Naive thymus-derived CD4-positive, alpha-beta T cell (primary cell): ENCODE measurements at regions of chr1 and their contacts with region 1.

Region 1: DNA sequence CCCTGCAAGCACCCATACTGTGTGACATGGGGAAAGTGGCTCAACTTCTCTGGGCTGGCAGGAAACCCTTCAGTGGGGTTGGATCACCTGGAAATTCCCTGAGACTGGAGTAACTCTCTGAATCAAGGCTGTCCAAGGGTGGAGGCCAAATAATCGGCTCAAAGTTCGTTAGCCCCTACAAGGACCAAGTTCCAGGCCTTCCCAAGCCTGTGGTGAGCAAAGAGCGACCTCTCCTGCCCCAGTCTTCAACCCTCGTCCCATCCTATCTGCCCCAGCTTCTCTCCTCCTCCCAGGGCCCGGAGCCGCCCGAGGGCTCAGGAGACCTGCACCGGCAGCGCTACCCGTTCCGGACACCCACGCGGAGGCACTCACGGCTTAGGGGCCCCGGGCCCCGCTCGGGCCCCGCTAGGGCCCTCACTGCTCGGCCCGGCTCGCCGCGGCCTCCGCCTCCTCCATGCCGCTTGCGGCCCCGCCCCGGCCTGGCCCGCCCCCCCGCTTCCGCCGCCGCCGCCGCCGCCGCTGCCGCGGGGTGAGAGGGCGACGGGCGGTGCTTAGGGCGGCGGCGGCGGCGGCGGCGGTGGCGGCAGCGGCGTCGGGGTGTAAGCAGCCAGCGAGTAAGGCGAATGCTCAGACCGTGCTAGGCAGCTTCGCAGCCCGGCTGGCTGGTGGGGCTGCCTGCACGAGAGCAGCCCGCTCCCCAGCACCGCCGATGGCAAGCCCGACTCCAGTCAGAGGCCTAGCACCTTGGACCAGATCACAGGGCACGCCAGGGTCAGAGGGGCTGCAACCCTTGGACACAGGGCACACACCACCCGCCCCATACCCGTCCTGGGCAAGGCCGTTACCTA is at the start of gene POMGNT1:
- DNase-seq: peak; percentile 60 to 88 (median 76)
- ATAC-seq: peak; percentile 97
- H3K4me3 ChIP-seq: peak within 1 kb of the TSS; percentile 84
- H3K4me3 Mint-ChIP-seq: peak within 1 kb of the TSS; percentile 78 to 88 (median 84)
- H3K27ac ChIP-seq: peak within 1 kb of the TSS; percentile 90
- H3K27ac Mint-ChIP-seq: peak within 1 kb of the TSS; percentile 44 to 90 (median 83)
- H3K4me1 ChIP-seq: peaks cover 13 to 22% of the 10 kb centered on the region in 2 donors
- H3K4me1 Mint-ChIP-seq: peaks cover 18 to 44% (median 30%) of the 10 kb centered on the region in 7 donors
- H3K27me3 ChIP-seq: no peaks in the 10 kb centered on the region
- H3K27me3 Mint-ChIP-seq: peaks cover 0 to 6% (median 0%) of the 10 kb centered on the region in 5 donors
- total RNA-seq, gene POMGNT1: 35.7 to 58.6 (median 41.9) TPM

Region 2: GRCh38 chr1:46166521-46167462 is 31.4 kb before region 1 on chr1:
- CTCF ChIA-PET with region 1: no interaction called
- POLR2A ChIA-PET with region 1: interaction called, 7 read pairs
- intact Hi-C with region 1: loop called in 1 of 2 experiments (anchors 1 kb)
- DNase-seq: peak; percentile 15 to 73 (median 65)
- ATAC-seq: peak; percentile 66
- H3K4me3 ChIP-seq: peak overlapping the region; percentile 83
- H3K4me3 Mint-ChIP-seq: peak overlapping the region; percentile 85 to 95 (median 91)
- H3K27ac ChIP-seq: peak overlapping the region; percentile 74
- H3K27ac Mint-ChIP-seq: peak overlapping the region; percentile 86 to 99 (median 96)
- H3K4me1 ChIP-seq: peaks cover 3 to 9% of the 10 kb centered on the region in 2 donors
- H3K4me1 Mint-ChIP-seq: peaks cover 10 to 26% (median 17%) of the 10 kb centered on the region in 7 donors
- H3K27me3 ChIP-seq: no peaks in the 10 kb centered on the region
- H3K27me3 Mint-ChIP-seq: peaks cover 0 to 30% (median 4%) of the 10 kb centered on the region in 5 donors

Region 3: DNA sequence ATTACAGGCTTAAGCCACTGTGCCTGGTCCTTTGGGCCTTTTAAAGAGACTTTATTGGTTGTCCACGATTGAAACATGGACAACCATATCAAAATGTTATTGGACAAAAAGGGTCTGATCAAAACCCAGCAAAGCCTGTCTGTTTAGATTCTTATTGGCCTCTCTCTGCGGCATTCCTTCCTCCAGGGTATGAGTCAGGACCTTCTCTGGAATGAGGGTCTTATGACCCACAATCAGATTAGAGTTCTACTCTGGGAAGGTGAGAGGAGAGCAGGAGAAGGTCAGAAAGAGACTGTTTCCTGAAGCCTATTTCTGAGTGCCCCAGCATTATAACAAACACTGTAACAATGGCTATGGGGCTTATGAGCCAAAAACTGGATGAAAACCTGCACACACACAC is 12.9 kb after region 1 on chr1:
- CTCF ChIA-PET with region 1: no interaction called
- POLR2A ChIA-PET with region 1: no interaction called
- intact Hi-C with region 1: no loop called
- DNase-seq: no peak
- ATAC-seq: no peak
- H3K4me3 ChIP-seq: no peak overlapping the region
- H3K4me3 Mint-ChIP-seq: no peak overlapping the region
- H3K27ac ChIP-seq: no peak overlapping the region
- H3K27ac Mint-ChIP-seq: no peak overlapping the region
- H3K4me1 ChIP-seq: no peaks in the 10 kb centered on the region
- H3K4me1 Mint-ChIP-seq: peaks cover 0 to 4% (median 0%) of the 10 kb centered on the region in 7 donors
- H3K27me3 ChIP-seq: no peaks in the 10 kb centered on the region
- H3K27me3 Mint-ChIP-seq: peaks cover 0 to 2% (median 0%) of the 10 kb centered on the region in 5 donors

Region 4: DNA sequence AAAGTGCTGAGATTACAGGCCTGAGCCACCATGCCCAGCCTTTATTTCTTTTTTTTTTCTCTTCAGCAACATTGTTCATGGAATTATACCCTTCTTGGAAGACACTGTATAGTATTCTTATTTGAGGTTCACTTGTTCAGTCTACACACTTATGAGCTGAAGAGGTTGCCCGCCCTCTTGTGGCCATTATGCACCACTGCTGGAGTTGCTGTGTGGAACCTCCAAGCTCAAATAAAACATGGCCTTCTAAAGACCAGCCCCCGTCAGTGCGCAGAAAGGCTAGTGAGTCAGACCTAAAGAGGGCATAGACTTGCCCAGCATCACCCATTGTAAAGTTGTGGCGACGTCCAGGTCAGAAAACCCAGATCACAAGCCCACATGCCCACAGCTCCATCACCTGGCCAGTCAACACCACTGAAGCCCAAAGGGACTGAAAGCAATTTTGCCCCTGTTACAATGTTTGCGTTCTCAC is 25.3 kb after region 1 on chr1:
- CTCF ChIA-PET with region 1: interaction called, 6 read pairs
- POLR2A ChIA-PET with region 1: no interaction called
- intact Hi-C with region 1: loop called in 1 of 2 experiments (anchors 2 kb)
- DNase-seq: peak; percentile 22 to 59 (median 46)
- ATAC-seq: peak; percentile 93
- H3K4me3 ChIP-seq: no peak overlapping the region
- H3K4me3 Mint-ChIP-seq: no peak overlapping the region
- H3K27ac ChIP-seq: no peak overlapping the region
- H3K27ac Mint-ChIP-seq: no peak overlapping the region
- H3K4me1 ChIP-seq: no peaks in the 10 kb centered on the region
- H3K4me1 Mint-ChIP-seq: peaks cover 0 to 4% (median 2%) of the 10 kb centered on the region in 7 donors
- H3K27me3 ChIP-seq: no peaks in the 10 kb centered on the region
- H3K27me3 Mint-ChIP-seq: no peaks in the 10 kb centered on the region

Region 5: DNA sequence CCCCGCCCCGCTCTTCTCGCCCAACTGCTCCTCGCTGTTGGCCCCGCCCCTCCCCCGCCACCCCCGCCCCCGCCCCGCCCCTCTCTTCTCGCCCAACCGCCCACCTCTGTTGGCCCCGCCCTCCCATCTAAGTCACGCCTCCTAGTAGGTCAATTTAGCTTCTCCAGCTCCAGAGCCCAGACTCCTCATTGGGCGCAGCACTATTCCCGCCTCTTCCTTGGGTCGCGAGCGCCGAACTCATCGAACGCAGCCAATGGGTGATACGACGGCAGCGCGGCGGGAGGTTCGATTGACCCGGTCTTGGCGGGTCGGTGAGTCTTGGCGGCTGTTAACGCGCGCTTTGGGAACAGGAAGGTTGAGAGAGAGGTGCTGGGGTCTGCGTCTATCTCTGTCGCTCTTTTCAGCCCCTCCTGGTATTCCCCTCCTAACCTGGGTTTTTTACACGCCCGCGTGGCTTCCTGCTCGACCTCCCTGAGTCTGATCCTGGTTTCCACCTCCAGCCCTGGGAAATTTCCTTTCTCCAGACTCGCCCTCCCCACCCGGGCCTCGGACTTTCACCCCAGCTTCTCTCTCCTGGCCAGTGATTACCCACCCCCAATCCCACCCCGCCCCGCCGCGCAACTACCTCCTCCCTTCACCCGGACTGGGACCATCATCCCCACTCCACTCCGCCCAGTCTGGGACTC is 49.4 kb after region 1 on chr1 and contains the start of gene RAD54L:
- CTCF ChIA-PET with region 1: no interaction called
- POLR2A ChIA-PET with region 1: interaction called, 5 read pairs
- intact Hi-C with region 1: loop called (anchors 1 kb)
- DNase-seq: peak; percentile 83 to 97 (median 95)
- ATAC-seq: peak; percentile 99
- H3K4me3 ChIP-seq: peak within 1 kb of the TSS; percentile 89
- H3K4me3 Mint-ChIP-seq: peak within 1 kb of the TSS; percentile 86 to 100 (median 94)
- H3K27ac ChIP-seq: peak within 1 kb of the TSS; percentile 66
- H3K27ac Mint-ChIP-seq: peak within 1 kb of the TSS; percentile 62 to 96 (median 78)
- H3K4me1 ChIP-seq: peaks cover 4 to 8% of the 10 kb centered on the region in 2 donors
- H3K4me1 Mint-ChIP-seq: peaks cover 0 to 41% (median 17%) of the 10 kb centered on the region in 7 donors
- H3K27me3 ChIP-seq: no peaks in the 10 kb centered on the region
- H3K27me3 Mint-ChIP-seq: no peaks in the 10 kb centered on the region
- total RNA-seq, gene RAD54L: 0.94 to 31.9 (median 2.1) TPM

Region 6: DNA sequence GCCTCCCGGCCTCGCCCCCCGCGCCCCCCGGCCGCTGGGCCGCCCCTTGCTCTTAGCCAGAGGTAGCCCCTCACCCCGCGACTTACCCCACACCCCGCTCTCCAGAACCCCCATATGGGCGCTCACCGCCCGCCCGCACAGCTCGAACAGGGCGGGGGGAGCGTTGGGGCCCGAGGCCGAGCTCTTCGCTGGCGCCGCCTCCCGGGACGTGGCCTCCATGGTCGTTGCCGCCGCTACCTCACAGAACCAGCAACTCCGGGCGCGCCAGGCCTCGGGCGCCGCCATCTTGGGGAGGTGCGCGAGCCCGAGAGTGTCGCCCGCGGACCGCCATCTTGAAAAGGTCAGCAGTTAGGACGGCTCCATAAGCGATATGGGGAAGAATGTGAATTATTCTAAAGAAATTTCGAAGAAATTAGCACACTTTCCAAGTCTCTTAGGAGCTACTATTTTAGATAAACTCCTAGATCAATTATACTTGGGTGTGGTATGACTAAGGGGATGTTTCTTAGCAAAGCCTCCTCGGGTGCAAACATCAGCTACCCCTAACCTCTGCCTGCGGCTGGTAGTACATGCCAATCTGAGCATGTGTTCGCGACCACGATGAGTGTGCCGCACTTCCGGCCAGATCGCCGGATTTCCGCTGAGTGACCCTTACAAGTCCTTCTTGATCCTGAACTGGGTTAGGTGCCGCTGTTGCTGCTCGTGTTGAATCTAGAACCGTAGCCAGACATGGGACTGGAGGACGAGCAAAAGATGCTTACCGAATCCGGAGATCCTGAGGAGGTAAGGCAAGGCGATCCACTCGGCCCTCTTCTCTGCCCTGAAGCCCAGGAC is 105.1 kb after region 1 on chr1 and contains the starts of genes LRRC41 and UQCRH:
- CTCF ChIA-PET with region 1: no interaction called
- POLR2A ChIA-PET with region 1: no interaction called
- intact Hi-C with region 1: loop called in 1 of 2 experiments (anchors 1 kb)
- DNase-seq: peak; percentile 91 to 96 (median 94)
- ATAC-seq: peak; percentile 94
- H3K4me3 ChIP-seq: peak within 1 kb of the TSS; percentile 83
- H3K4me3 Mint-ChIP-seq: peak within 1 kb of the TSS; percentile 94 to 99 (median 98)
- H3K27ac ChIP-seq: peak within 1 kb of the TSS; percentile 98
- H3K27ac Mint-ChIP-seq: peak within 1 kb of the TSS; percentile 95 to 99 (median 97)
- H3K4me1 ChIP-seq: peaks cover 19 to 37% of the 10 kb centered on the region in 2 donors
- H3K4me1 Mint-ChIP-seq: peaks cover 31 to 65% (median 46%) of the 10 kb centered on the region in 7 donors
- H3K27me3 ChIP-seq: no peaks in the 10 kb centered on the region
- H3K27me3 Mint-ChIP-seq: peaks cover 0 to 2% (median 0%) of the 10 kb centered on the region in 5 donors
- total RNA-seq, gene LRRC41: 34.4 to 50.5 (median 37.2) TPM
- total RNA-seq, gene UQCRH: 107 to 260 (median 127) TPM